ENCODE measurements at regions of chr12 and their contacts with region 1.

Region 1: DNA sequence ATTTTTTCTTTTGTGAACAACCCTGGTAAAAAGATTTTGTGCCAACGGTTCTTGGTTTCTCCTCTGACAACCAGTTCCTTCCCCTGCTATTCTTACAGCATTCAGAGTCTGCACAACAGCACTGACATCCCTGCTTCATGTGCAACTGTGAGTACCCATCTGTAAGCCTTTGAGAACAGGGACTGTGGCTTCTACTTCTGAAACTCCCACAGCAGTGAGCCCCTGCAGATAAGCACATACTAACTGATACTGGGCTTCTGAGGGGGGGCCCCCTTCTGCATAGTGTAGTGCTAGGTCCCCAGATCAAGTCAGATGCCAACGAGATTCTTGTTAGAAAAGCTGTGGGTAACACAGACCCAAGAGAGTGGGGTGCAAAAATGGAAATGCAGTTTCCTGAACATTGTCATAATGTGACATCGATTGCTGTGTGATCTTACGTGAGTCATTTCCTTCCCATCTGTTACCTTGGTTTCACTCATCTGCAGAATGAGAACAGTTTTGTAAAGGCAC is 11.1 kb upstream of the NINJ2 start:
- DNase-seq: peak; percentile 74
- H3K4me3 Mint-ChIP-seq: peak overlapping the region; percentile 58
- H3K27ac Mint-ChIP-seq: peak overlapping the region; percentile 69
- H3K4me1 Mint-ChIP-seq: peaks cover 65% of the 10 kb centered on the region
- H3K27me3 Mint-ChIP-seq: no peaks in the 10 kb centered on the region

Region 2: DNA sequence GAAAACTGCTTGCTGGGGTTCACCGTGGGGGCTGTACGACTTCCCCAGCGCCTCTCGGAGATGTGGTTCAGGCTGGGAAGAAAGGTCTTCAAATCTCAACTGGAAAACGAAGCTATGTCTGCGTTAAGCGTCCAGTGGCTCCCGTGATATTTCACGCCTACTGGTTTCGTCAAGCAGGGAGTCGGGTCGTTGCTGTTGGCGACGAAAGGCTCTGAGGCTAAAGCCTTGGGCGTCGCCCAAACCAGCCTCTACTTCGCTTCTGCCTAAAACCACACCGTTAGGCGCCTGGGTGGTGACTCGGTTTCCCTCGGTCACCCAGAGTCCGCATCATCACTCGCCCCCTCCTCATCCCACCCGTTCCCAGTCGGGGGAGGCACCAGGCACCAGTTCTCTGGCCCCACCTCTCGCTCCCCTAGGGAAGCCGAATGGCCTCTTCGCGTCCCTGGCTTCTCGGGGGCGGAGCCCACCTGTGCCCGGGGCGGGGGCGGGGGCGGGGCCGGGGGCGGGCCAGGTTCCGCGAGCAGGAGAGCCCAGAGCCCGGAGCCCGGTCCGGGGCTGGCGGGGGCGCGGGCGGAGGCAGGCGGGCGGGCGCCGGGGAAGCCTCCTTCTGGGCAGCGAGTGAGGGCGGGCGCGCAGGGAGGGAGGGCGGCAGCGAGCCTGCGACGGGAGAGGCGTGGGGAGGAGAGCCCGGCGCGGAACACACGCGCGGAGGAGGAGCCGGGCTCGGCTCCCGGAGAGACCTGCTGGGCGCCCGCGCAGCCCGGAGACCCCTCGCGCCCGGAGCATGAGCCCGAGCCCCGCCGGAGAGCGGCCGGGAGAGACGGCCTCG is 214.7 kb before region 1 on chr12 and contains the start of gene B4GALNT3:
- intact Hi-C with region 1: loop called (anchors 10 kb)
- DNase-seq: peak; percentile 17
- H3K4me3 Mint-ChIP-seq: peak within 1 kb of the TSS; percentile 65
- H3K27ac Mint-ChIP-seq: no peak within 1 kb of the TSS
- H3K4me1 Mint-ChIP-seq: peaks cover 5% of the 10 kb centered on the region
- H3K27me3 Mint-ChIP-seq: peaks cover 67% of the 10 kb centered on the region
- total RNA-seq, gene B4GALNT3: 6.5 and 6.9 TPM in 2 replicates

Region 3: GRCh38 chr12:630656-631632 is 43.4 kb before region 1 on chr12:
- intact Hi-C with region 1: loop called (anchors 2 kb)
- DNase-seq: peak; percentile 82
- H3K4me3 Mint-ChIP-seq: peak overlapping the region; percentile 100
- H3K27ac Mint-ChIP-seq: peak overlapping the region; percentile 99
- H3K4me1 Mint-ChIP-seq: peaks cover 27% of the 10 kb centered on the region
- H3K27me3 Mint-ChIP-seq: no peaks in the 10 kb centered on the region

Region 4: GRCh38 chr12:645563-646071 is 28.7 kb before region 1 on chr12:
- intact Hi-C with region 1: no loop called
- DNase-seq: no peak
- H3K4me3 Mint-ChIP-seq: no peak overlapping the region
- H3K27ac Mint-ChIP-seq: no peak overlapping the region
- H3K4me1 Mint-ChIP-seq: peaks cover 25% of the 10 kb centered on the region
- H3K27me3 Mint-ChIP-seq: no peaks in the 10 kb centered on the region

Region 5: GRCh38 chr12:694734-695503 is 20.6 kb after region 1 on chr12:
- intact Hi-C with region 1: no loop called
- DNase-seq: no peak
- H3K4me3 Mint-ChIP-seq: no peak overlapping the region
- H3K27ac Mint-ChIP-seq: no peak overlapping the region
- H3K4me1 Mint-ChIP-seq: peaks cover 8% of the 10 kb centered on the region
- H3K27me3 Mint-ChIP-seq: no peaks in the 10 kb centered on the region

Region 6: GRCh38 chr12:712172-712863 is 38.0 kb after region 1 on chr12:
- intact Hi-C with region 1: loop called (anchors 1 kb)
- DNase-seq: no peak
- H3K4me3 Mint-ChIP-seq: no peak overlapping the region
- H3K27ac Mint-ChIP-seq: peak overlapping the region; percentile 70
- H3K4me1 Mint-ChIP-seq: peaks cover 29% of the 10 kb centered on the region
- H3K27me3 Mint-ChIP-seq: no peaks in the 10 kb centered on the region

Region 7: GRCh38 chr12:738712-739111 is 64.4 kb after region 1 on chr12:
- intact Hi-C with region 1: loop called (anchors 1 kb)
- DNase-seq: no peak
- H3K4me3 Mint-ChIP-seq: no peak overlapping the region
- H3K27ac Mint-ChIP-seq: no peak overlapping the region
- H3K4me1 Mint-ChIP-seq: peaks cover 21% of the 10 kb centered on the region
- H3K27me3 Mint-ChIP-seq: no peaks in the 10 kb centered on the region

Region 8: DNA sequence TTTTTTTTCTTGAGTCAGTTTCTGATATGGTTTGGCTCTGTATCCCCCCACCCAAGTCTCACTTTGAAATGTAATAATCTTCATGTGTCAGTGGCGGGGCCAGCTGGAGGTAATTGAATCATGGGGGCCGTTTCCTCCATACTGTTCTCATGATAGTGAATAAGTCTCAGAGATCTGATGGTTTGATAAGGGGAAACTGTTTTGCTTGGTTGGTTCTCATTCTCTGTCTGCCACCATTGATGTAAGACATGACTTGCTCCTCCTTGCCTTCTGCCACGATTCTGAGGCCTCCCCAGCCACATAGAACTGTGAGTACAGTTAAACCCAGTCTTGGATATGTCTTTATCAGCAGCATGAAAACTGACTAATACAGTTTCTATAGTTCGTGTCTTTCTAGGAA is 121.0 kb after region 1 on chr12:
- intact Hi-C with region 1: loop called (anchors 1 kb)
- DNase-seq: peak; percentile 51
- H3K4me3 Mint-ChIP-seq: peak overlapping the region; percentile 48
- H3K27ac Mint-ChIP-seq: peak overlapping the region; percentile 94
- H3K4me1 Mint-ChIP-seq: peaks cover 58% of the 10 kb centered on the region
- H3K27me3 Mint-ChIP-seq: no peaks in the 10 kb centered on the region

Region 9: DNA sequence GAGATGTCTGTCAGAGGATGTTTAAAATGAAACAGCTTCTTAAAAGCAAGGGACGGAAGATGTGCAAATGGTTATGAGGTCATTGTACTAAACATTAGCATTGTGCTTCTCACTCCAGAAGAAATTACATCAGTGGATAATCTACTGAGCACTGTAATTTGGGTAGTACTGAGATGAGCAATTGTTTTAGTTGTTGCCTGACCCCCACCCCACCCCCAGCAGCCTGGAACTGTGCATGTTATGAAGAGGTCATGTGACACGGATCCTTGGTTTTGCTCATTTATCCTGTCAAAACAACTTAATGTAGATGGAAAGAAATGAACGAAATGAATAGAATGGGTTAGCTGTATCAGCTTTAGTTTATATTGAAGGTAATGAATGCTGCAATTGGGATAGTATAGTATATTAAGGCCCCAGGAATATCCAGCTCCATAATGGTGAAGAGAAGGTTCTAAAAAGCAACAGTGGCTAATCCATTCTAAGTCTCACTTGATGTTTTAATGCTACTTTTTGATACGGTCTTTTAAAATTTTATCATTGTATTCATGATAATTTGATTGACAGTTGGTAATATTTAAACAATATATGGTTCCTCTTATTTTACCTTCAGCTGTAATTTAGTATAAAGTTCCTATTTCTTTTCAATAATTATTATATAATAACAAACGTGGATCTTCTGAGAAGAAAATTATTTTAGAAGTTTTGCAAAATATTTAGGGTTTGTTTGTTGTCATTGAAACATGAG is 136.5 kb after region 1 on chr12:
- intact Hi-C with region 1: loop called (anchors 5 kb)
- DNase-seq: no peak
- H3K4me3 Mint-ChIP-seq: no peak overlapping the region
- H3K27ac Mint-ChIP-seq: peak overlapping the region; percentile 18
- H3K4me1 Mint-ChIP-seq: peaks cover 55% of the 10 kb centered on the region
- H3K27me3 Mint-ChIP-seq: no peaks in the 10 kb centered on the region